PC-3 (cell line): ENCODE measurements at regions of chr10 and their contacts with region 1.

Region 1: DNA sequence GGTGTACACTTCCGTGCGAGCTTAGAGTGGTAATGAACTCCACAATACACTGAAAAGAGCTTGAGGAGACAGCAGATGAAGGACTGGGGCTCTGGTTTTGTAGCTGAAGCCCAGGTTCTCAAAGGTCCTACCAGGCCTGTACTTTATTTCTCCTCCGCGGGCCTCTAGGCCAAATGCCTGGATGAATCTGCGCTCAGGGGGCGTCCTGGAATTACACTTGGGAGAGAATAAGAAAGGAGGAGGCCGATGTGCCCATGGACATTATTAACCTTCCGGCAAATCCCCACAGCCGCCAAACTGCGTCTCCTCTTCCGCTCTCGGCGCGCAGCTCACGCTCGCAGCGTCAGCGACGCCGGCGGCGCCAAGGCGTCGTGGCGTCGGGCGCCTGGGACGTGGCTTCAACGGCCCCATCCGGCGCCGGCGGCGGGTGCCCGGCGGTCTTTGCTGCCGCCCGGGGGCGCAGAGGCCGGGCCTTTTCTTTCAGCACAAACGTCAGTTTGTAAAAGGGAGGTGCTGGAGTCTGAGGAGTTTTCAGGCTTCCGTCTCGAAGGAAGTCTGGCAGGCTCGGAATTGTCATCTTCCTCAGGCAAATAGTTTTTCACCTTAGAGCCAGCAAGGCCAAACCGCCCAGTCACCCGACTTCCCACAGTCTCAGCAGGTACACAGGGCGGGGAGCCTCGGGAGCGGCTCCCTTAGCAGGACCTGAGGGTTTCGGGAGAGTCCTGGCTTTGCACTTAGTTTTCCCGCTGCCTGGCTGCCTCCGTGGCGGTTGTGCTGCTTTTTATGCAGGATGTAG is at the start of gene CCDC7:
- DNase-seq: peak; percentile 99
- ATAC-seq: peak; percentile 96
- H3K4me3 ChIP-seq: peak within 1 kb of the TSS; percentile 79
- H3K27ac ChIP-seq: peak within 1 kb of the TSS; percentile 82
- H3K4me1 ChIP-seq: peaks cover 18% of the 10 kb centered on the region
- H3K27me3 ChIP-seq: no peaks in the 10 kb centered on the region
- CTCF ChIP-seq: peak; percentile 84
- total RNA-seq, gene CCDC7: 14.1 and 19.1 TPM in 2 replicates

Region 2: GRCh38 chr10:32378363-32379317 is 67.3 kb before region 1 on chr10:
- CTCF ChIA-PET with region 1: interaction called, 3 read pairs
- POLR2A ChIA-PET with region 1: no interaction called
- intact Hi-C with region 1: loop called (anchors 1 kb)
- DNase-seq: peak; percentile 96
- ATAC-seq: peak; percentile 90
- H3K4me3 ChIP-seq: peak overlapping the region; percentile 74
- H3K27ac ChIP-seq: peak overlapping the region; percentile 68
- H3K4me1 ChIP-seq: peaks cover 55% of the 10 kb centered on the region
- H3K27me3 ChIP-seq: no peaks in the 10 kb centered on the region
- CTCF ChIP-seq: no peak

Region 3: DNA sequence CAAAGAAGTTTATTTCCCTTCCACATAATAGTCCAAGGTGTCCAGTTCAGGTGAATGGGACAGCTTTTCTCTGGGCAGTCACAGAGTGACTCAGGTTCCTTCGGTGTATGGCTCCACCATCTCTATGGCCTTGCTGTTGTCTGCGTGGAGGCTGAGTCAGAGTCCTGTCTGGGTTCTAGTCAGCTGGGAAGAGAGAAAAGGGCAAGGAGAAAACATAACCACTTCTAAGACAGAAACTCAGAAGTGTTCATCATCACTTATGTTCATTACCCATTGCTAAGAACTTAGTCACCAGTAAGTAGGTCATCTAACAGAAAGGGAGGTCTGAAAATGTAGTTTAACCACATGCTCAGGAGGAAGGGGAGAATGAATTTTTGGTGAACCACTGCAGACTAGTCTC is 32.4 kb before region 1 on chr10:
- CTCF ChIA-PET with region 1: no interaction called
- POLR2A ChIA-PET with region 1: no interaction called
- intact Hi-C with region 1: loop called (anchors 2 kb)
- DNase-seq: peak; percentile 96
- ATAC-seq: peak; percentile 90
- H3K4me3 ChIP-seq: no peak overlapping the region
- H3K27ac ChIP-seq: peak overlapping the region; percentile 68
- H3K4me1 ChIP-seq: peaks cover 25% of the 10 kb centered on the region
- H3K27me3 ChIP-seq: no peaks in the 10 kb centered on the region
- CTCF ChIP-seq: no peak

Region 4: DNA sequence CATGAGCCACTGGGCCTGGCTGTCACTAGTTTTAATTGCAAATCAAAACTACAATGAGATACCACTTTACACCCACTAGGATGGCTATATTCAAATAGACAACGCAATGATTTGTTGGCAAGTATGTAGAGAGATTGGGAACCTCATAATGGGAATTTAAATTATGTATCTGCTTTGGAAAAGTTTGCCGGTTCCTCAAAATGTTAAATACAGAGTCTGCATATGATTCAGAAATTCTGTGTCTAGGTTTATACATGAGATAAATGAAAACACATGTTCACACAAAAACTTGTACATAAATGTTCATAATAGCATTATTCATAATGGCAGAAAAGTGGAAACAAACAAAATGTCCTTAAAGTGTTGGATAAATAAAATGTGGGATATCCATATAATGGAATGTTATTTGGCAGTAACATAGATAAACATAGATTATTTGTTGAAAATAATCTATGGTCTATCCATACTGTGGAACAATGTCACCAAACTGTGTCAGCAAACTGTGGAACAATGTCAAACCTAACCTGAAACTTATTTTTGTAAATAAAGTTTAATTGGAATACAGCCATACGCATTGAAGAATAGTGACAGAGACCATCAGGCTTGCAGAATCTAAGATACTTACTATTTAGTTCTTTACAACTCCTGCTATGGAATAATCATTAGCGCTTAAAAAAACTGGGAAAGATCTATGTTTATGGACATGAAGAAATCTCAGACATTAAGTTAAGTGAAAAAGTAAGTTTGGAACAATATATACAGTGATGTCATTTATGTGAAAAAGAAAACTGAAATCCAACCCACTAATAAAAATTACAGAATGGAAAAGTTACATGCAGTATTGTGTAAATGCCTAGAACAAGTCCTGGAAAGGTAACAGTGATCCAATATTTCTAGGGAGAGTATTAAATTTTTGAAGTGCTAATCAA is 70.9 kb after region 1 on chr10:
- CTCF ChIA-PET with region 1: no interaction called
- POLR2A ChIA-PET with region 1: no interaction called
- intact Hi-C with region 1: no loop called
- DNase-seq: no peak
- ATAC-seq: no peak
- H3K4me3 ChIP-seq: no peak overlapping the region
- H3K27ac ChIP-seq: no peak overlapping the region
- H3K4me1 ChIP-seq: no peaks in the 10 kb centered on the region
- H3K27me3 ChIP-seq: no peaks in the 10 kb centered on the region
- CTCF ChIP-seq: no peak